Mammary epithelial cell (primary cell): ENCODE measurements at regions of chr11 and their contacts with region 1.

Region 1: GRCh38 chr11:88543902-88544655 is 206.5 kb upstream of the CTSC start:
- DNase-seq: peak; percentile 87
- H3K4me3 ChIP-seq: no peak overlapping the region
- H3K27ac ChIP-seq: peak overlapping the region; percentile 39
- H3K4me1 ChIP-seq: peaks cover 17% of the 10 kb centered on the region
- H3K27me3 ChIP-seq: no peaks in the 10 kb centered on the region
- CTCF ChIP-seq: peak; percentile 98 to 100

Region 2: DNA sequence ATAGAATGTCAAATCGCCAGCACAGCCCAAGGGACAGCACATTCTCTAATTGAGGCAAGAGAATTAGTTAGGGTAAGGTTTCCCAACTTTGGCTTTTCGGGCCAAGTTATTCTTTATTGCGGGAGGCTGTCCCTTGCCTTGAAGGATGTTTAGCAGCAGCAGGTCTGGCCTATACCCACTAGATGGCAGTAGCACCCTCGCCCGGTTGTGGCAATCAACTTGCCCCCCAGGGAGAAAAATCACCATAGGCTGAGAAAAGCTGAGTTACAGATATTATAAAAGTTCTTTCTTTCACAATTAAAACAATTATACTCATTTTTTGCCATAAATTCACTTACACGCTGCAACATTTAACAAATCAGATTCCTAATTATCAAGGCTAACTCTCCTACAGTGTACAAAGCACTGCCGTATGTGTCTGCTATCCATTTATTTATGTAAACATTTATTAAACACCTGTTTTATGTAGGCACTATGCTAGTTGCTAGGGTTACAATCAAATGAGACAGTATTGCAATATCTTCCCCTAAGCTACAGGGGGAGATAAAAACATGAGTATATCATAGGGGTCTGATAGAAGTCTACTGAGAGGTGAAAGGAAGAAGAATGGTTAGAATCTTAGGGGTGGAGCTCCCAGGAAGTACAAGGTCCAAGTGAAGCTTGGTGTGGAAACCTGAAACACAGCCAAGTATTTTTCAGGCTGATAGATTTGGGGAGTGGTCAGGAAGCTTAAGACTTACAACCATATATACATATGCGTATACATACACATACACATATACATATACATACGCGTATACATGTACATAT is 821.1 kb before region 1 on chr11:
- CTCF ChIA-PET with region 1: no interaction called
- dilution Hi-C with region 1: no loop called
- in situ Hi-C with region 1: no loop called
- intact Hi-C with region 1: loop called (anchors 1 kb)
- DNase-seq: peak; percentile 7
- H3K4me3 ChIP-seq: no peak overlapping the region
- H3K27ac ChIP-seq: no peak overlapping the region
- H3K4me1 ChIP-seq: no peaks in the 10 kb centered on the region
- H3K27me3 ChIP-seq: peaks cover 2% of the 10 kb centered on the region
- CTCF ChIP-seq: peak; percentile 78 to 91

Region 3: DNA sequence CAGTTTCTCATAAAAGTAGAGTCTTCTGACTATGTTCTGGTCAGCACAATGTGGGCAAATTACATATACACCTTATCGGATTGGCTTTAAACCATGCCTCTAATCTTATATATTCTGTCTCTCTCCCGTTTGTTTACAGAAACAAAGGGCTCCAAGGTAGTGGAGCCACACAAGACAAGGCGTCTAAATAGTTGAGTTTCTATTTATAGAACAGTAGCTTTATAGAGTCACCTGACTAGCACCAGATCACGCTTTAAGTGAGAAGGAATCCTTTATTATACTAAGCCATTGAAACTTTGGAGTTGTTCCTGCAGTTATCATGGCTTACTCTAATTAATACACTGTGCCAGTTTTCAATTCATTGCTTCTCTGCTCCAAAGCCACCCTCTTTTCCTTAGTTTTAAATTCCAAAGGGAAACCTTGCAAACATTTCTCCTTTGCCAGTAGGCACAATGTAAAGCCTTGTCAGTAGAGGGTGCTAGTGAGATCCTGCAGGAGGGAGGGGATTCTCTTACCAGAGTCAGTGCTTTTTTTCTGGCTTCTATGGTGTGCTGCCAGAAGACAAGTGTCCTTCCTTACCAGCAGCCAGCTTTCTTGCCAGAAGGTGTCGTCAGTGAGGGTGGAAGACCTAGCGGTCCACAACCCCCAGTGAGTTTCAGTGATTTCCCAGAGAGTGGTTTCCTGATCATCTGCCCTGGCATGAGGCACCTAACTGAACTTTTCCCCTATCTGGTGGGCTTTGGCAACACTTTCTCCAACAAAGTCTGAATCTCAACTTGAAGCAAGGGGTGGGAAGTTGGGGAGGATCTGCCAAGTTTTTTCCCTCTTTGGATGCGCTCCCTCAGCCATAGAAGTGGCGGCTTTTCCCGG is 440.5 kb before region 1 on chr11:
- CTCF ChIA-PET with region 1: no interaction called
- dilution Hi-C with region 1: no loop called
- in situ Hi-C with region 1: no loop called
- intact Hi-C with region 1: loop called (anchors 2 kb)
- DNase-seq: peak; percentile 47
- H3K4me3 ChIP-seq: no peak overlapping the region
- H3K27ac ChIP-seq: peak overlapping the region; percentile 54
- H3K4me1 ChIP-seq: peaks cover 14% of the 10 kb centered on the region
- H3K27me3 ChIP-seq: no peaks in the 10 kb centered on the region
- CTCF ChIP-seq: peak; percentile 63 to 81

Region 4: GRCh38 chr11:88281317-88281712 is 262.8 kb before region 1 on chr11:
- CTCF ChIA-PET with region 1: interaction called, 3 read pairs
- dilution Hi-C with region 1: no loop called
- in situ Hi-C with region 1: no loop called
- intact Hi-C with region 1: loop called (anchors 1 kb)
- DNase-seq: no peak
- H3K4me3 ChIP-seq: no peak overlapping the region
- H3K27ac ChIP-seq: no peak overlapping the region
- H3K4me1 ChIP-seq: peaks cover 6% of the 10 kb centered on the region
- H3K27me3 ChIP-seq: no peaks in the 10 kb centered on the region
- CTCF ChIP-seq: peak; percentile 14 to 44

Region 5: GRCh38 chr11:88320149-88320559 is 223.9 kb before region 1 on chr11:
- CTCF ChIA-PET with region 1: no interaction called
- dilution Hi-C with region 1: loop called (anchors 10 kb)
- in situ Hi-C with region 1: loop called in 1 of 2 experiments (anchors 10 kb)
- intact Hi-C with region 1: no loop called
- DNase-seq: peak; percentile 32
- H3K4me3 ChIP-seq: no peak overlapping the region
- H3K27ac ChIP-seq: no peak overlapping the region
- H3K4me1 ChIP-seq: peaks cover 29% of the 10 kb centered on the region
- H3K27me3 ChIP-seq: no peaks in the 10 kb centered on the region
- CTCF ChIP-seq: no peak

Region 6: GRCh38 chr11:88421530-88421929 is 122.5 kb before region 1 on chr11:
- CTCF ChIA-PET with region 1: no interaction called
- dilution Hi-C with region 1: no loop called
- in situ Hi-C with region 1: no loop called
- intact Hi-C with region 1: loop called (anchors 2 kb)
- DNase-seq: peak; percentile 82
- H3K4me3 ChIP-seq: no peak overlapping the region
- H3K27ac ChIP-seq: peak overlapping the region; percentile 95
- H3K4me1 ChIP-seq: peaks cover 45% of the 10 kb centered on the region
- H3K27me3 ChIP-seq: no peaks in the 10 kb centered on the region
- CTCF ChIP-seq: no peak